Dendritic cell treated with granulocyte-macrophage colony-stimulating factor and Interleukin-4, amounts not matched to agents 40 ng/mL and 50 ng/mL, for 4 days (primary cell): ENCODE measurements at regions of chr1 and their contacts with region 1.

Region 1: GRCh38 chr1:88877382-88877825 is 14.0 kb downstream of the GTF2B start:
- H3K4me3 Mint-ChIP-seq: no peak overlapping the region
- H3K27ac Mint-ChIP-seq: no peak overlapping the region
- H3K4me1 Mint-ChIP-seq: peaks cover 26% of the 10 kb centered on the region
- H3K27me3 Mint-ChIP-seq: no peaks in the 10 kb centered on the region

Region 2: GRCh38 chr1:88608139-88608943 is 269.1 kb before region 1 on chr1:
- intact Hi-C with region 1: loop called (anchors 5 kb)
- H3K4me3 Mint-ChIP-seq: no peak overlapping the region
- H3K27ac Mint-ChIP-seq: no peak overlapping the region
- H3K4me1 Mint-ChIP-seq: no peaks in the 10 kb centered on the region
- H3K27me3 Mint-ChIP-seq: no peaks in the 10 kb centered on the region

Region 3: DNA sequence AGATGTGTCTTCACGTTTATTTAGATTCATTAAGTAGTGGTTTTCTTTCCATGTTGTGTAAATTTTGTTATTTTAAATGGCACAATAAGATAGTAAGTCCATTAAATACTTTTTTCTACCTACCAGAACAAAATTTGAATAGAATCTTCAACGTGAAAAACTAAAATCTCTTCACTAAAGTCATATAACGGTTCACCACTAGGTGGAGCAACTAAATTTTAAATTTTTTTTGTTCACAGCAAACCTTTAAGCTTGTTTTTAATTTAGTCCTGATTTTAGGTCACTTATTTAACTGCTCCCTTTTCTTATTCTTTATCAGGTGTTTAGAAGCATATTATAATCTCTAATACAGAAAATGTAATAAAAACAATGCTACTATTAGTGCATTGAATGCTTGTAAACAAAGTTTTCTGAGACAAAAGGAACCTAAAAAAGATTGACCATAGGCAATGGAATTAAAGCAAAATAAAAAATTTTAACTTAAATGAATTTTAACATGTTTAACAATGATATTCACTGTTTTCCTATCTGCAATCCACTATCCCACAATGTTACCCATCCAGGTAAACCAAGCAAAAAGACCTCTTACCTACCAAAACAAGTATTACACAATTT is 221.6 kb before region 1 on chr1:
- intact Hi-C with region 1: loop called (anchors 2 kb)
- H3K4me3 Mint-ChIP-seq: no peak overlapping the region
- H3K27ac Mint-ChIP-seq: no peak overlapping the region
- H3K4me1 Mint-ChIP-seq: no peaks in the 10 kb centered on the region
- H3K27me3 Mint-ChIP-seq: no peaks in the 10 kb centered on the region

Region 4: DNA sequence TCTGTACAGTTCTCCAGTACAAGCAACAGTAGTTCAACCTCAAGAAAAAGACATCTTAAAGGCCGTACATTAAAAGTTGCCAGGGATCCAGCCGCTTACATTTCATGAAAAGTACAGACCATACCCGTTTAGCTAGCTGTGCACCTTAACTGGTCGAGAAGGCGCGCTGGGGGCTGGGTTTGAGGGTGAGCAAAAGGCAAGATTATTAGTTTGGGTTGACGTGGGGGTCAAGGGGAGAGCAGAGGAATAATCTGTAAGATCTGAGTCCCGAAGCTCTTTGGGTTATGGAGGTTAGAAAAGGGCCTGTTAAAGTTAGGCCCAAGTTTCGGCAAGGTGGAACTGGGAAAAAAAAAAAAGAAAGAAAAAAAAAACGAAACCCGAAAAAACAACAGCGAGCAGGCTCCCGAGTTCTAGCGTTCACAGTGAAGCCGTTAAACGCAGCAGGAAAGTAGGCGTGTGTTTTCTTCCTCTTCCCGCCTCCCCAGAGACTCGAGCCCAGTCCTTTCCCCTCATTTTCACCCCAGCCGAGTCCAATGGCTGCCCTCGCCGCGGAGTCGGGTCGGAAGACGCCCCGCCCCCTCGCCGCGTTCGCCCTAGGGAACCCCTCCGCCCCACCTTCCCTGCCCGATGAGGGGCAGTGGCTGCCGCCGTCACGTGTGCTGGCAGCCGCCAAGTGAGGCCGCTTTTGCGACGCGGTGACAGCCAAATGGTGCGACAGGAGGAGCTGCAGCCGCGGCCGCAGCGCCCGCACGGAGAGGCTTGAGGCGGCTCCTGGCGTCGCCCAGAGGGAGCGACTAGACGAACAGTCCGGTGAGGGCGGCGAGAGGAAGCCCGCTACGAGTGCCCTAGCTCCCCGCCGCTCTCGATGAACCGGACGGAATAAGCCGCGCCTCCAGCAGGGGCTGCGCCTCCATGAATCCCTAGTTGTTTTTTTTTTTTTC is 193.6 kb before region 1 on chr1 and contains the start of gene PKN2:
- intact Hi-C with region 1: loop called (anchors 5 kb)
- H3K4me3 Mint-ChIP-seq: peak within 1 kb of the TSS; percentile 99
- H3K27ac Mint-ChIP-seq: peak within 1 kb of the TSS; percentile 97
- H3K4me1 Mint-ChIP-seq: peaks cover 16% of the 10 kb centered on the region
- H3K27me3 Mint-ChIP-seq: no peaks in the 10 kb centered on the region

Region 5: DNA sequence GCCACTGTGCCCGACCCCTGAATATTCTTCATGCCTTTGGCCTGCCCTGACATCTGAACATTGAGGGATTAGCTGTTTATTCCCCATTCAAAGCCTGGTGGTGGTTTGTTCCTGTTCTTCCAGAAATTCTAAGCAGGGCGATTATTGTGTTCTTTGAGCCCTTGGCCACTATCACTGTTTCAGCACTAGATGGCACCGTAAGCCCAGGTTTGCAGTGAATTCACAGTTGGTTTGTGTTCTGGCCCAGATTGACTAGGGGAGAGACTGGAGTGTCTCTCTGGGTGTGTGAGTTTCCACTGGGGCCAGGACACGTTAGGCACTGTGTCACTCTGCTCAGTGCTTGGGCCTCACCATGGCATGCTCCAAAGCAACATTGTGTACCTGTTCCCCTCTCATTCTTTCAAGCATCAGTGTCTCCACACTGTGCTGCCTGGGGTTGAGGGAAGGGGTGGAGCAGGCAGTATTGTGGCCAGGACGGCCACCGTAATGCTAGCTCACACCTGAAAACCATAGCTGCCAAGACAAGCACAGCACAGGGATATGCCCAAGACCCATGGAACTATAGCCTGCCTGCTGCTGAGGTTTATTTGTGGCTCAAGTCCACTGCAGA is 140.7 kb before region 1 on chr1:
- intact Hi-C with region 1: loop called (anchors 2 kb)
- H3K4me3 Mint-ChIP-seq: no peak overlapping the region
- H3K27ac Mint-ChIP-seq: no peak overlapping the region
- H3K4me1 Mint-ChIP-seq: peaks cover 36% of the 10 kb centered on the region
- H3K27me3 Mint-ChIP-seq: no peaks in the 10 kb centered on the region